ENCODE measurements at regions of chr6 and their contacts with region 1.

Region 1: GRCh38 chr6:12605888-12606345 is 110.7 kb upstream of the PHACTR1 start:
- DNase-seq: peak; percentile 80
- H3K4me3 Mint-ChIP-seq: no peak overlapping the region
- H3K27ac Mint-ChIP-seq: no peak overlapping the region
- H3K4me1 Mint-ChIP-seq: peaks cover 30% of the 10 kb centered on the region
- H3K27me3 Mint-ChIP-seq: no peaks in the 10 kb centered on the region
- CTCF ChIP-seq: peak; percentile 69

Region 2: DNA sequence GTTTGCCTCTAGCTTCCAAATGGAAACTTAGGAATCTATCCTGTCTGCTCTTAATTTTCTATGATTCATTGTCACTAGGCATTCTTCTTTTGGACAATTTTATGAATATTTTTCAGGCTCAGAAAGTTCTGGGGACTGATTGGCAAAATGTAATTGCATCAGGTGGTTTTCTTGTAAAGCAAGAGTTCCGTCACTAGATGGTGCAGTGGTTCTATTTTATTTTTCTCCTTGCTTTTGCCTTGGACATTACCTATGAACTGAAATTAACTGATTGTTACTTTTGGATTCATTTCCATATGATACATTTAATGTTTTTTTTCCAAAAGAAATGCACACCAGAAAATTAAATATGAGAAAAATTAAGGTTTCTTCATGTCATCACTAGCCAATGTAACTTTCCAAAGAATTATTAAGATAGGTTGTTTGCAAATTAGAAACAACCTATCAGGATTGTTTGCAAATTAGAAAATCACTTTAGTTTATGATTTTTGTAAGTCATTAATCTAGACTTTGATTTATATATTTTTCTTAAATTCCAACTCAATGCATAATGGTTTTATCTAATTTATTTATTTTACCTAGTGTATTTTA is 1020.4 kb before region 1 on chr6:
- CTCF ChIA-PET with region 1: interaction called, 4 read pairs
- POLR2A ChIA-PET with region 1: no interaction called
- intact Hi-C with region 1: loop called (anchors 2 kb)
- DNase-seq: peak; percentile 61
- H3K4me3 Mint-ChIP-seq: no peak overlapping the region
- H3K27ac Mint-ChIP-seq: no peak overlapping the region
- H3K4me1 Mint-ChIP-seq: no peaks in the 10 kb centered on the region
- H3K27me3 Mint-ChIP-seq: no peaks in the 10 kb centered on the region
- CTCF ChIP-seq: peak; percentile 60

Region 3: GRCh38 chr6:12150812-12151432 is 455.0 kb before region 1 on chr6:
- CTCF ChIA-PET with region 1: interaction called, 4 read pairs
- POLR2A ChIA-PET with region 1: no interaction called
- intact Hi-C with region 1: loop called (anchors 2 kb)
- DNase-seq: peak; percentile 57
- H3K4me3 Mint-ChIP-seq: no peak overlapping the region
- H3K27ac Mint-ChIP-seq: no peak overlapping the region
- H3K4me1 Mint-ChIP-seq: peaks cover 17% of the 10 kb centered on the region
- H3K27me3 Mint-ChIP-seq: no peaks in the 10 kb centered on the region
- CTCF ChIP-seq: peak; percentile 69

Region 4: GRCh38 chr6:12233693-12234571 is 372.0 kb before region 1 on chr6:
- CTCF ChIA-PET with region 1: interaction called, 15 read pairs
- POLR2A ChIA-PET with region 1: no interaction called
- intact Hi-C with region 1: loop called (anchors 2 kb)
- DNase-seq: peak; percentile 81
- H3K4me3 Mint-ChIP-seq: no peak overlapping the region
- H3K27ac Mint-ChIP-seq: no peak overlapping the region
- H3K4me1 Mint-ChIP-seq: no peaks in the 10 kb centered on the region
- H3K27me3 Mint-ChIP-seq: no peaks in the 10 kb centered on the region
- CTCF ChIP-seq: peak; percentile 74

Region 5: DNA sequence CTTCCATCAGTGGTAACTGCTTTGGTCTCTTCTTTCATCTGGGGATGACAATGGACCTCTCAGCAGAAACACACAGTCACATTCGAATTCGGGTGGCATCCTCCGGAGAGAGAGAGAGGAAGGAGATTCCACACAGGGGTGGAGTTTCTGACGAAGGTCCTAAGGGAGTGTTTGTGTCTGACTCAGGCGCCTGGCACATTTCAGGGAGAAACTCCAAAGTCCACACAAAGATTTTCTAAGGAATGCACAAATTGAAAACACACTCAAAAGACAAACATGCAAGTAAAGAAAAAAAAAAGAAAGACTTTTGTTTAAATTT is 309.7 kb before region 1 on chr6:
- CTCF ChIA-PET with region 1: interaction called, 197 read pairs
- POLR2A ChIA-PET with region 1: interaction called, 116 read pairs
- intact Hi-C with region 1: loop called (anchors 1 kb)
- DNase-seq: peak; percentile 82
- H3K4me3 Mint-ChIP-seq: peak overlapping the region; percentile 62
- H3K27ac Mint-ChIP-seq: peak overlapping the region; percentile 95
- H3K4me1 Mint-ChIP-seq: peaks cover 56% of the 10 kb centered on the region
- H3K27me3 Mint-ChIP-seq: no peaks in the 10 kb centered on the region
- CTCF ChIP-seq: no peak

Region 6: GRCh38 chr6:12395898-12396297 is 210.0 kb before region 1 on chr6:
- CTCF ChIA-PET with region 1: interaction called, 7 read pairs
- POLR2A ChIA-PET with region 1: interaction called, 3 read pairs
- intact Hi-C with region 1: loop called (anchors 1 kb)
- DNase-seq: no peak
- H3K4me3 Mint-ChIP-seq: no peak overlapping the region
- H3K27ac Mint-ChIP-seq: no peak overlapping the region
- H3K4me1 Mint-ChIP-seq: no peaks in the 10 kb centered on the region
- H3K27me3 Mint-ChIP-seq: no peaks in the 10 kb centered on the region
- CTCF ChIP-seq: no peak

Region 7: DNA sequence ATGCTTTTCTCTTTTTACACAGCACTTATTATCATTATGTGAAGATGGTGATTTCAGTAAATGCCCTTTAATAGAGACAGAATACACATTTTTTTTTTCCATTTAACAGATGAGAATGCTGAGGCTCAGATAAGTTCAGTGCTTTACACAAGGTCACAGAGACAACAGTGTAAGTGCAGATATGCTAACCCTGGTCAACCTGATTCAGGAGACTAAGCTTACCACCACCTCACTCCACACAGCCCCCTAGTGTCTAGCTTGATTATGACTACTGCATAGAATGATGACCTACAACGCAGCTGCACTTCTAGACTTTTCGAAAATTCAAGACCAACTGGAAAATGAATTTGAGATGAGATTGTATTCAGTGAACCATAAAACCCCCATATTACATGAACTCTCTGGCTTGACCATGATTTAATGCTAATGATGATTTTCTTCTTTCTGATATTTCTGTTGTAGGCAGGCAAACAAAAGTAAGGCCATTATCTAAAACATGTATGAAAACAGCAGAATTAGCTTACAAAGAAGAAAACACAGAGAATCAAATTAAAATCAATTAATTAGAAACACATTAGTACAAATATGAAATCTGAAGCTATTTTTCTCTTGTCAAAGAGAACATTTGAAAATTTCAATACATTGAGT is 101.5 kb before region 1 on chr6:
- CTCF ChIA-PET with region 1: interaction called, 3 read pairs
- POLR2A ChIA-PET with region 1: no interaction called
- intact Hi-C with region 1: loop called (anchors 1 kb)
- DNase-seq: peak; percentile 61
- H3K4me3 Mint-ChIP-seq: no peak overlapping the region
- H3K27ac Mint-ChIP-seq: no peak overlapping the region
- H3K4me1 Mint-ChIP-seq: peaks cover 7% of the 10 kb centered on the region
- H3K27me3 Mint-ChIP-seq: no peaks in the 10 kb centered on the region
- CTCF ChIP-seq: peak; percentile 55

Region 8: DNA sequence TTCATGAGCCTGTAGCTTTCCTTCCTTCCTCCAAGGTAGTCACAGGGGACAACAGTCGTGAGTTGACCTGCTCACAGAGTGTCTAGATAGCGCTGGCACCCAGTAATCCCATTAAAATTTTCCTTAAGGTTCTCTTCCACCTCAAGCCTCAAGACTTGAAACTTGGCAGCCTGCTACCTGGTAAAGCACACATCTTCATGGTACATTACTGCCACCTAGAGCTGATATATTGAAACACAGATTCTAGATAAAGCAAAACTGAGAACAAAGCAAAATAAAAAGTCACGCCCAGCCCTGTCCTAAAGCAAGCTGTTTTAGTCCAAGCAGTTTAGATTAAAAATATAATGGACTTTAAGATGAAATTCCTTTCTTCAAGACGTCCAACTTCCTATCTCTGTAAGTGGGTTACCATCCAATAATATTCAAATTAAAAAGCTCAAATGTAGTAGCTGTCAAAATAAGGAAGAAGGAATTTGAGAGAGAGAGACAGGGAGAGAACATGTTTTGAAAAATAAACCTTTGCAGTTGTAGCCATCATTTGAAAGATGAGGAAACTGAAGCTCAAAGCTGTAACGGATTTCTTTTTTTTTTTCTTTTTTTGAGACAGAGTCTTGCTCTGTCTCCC is 1461.0 kb after region 1 on chr6:
- CTCF ChIA-PET with region 1: no interaction called
- POLR2A ChIA-PET with region 1: no interaction called
- intact Hi-C with region 1: no loop called
- DNase-seq: peak; percentile 82
- H3K4me3 Mint-ChIP-seq: no peak overlapping the region
- H3K27ac Mint-ChIP-seq: no peak overlapping the region
- H3K4me1 Mint-ChIP-seq: peaks cover 17% of the 10 kb centered on the region
- H3K27me3 Mint-ChIP-seq: no peaks in the 10 kb centered on the region
- CTCF ChIP-seq: peak; percentile 44